ENCODE measurements at regions of chr6 and their contacts with region 1.

Region 1: GRCh38 chr6:139124887-139125672 is 9.8 kb upstream of the HECA start:
- DNase-seq: peak; percentile 91
- ATAC-seq: peak; percentile 96
- H3K4me3 Mint-ChIP-seq: peak overlapping the region; percentile 53
- H3K27ac Mint-ChIP-seq: peak overlapping the region; percentile 96
- H3K4me1 Mint-ChIP-seq: peaks cover 49% of the 10 kb centered on the region
- H3K27me3 Mint-ChIP-seq: no peaks in the 10 kb centered on the region
- CTCF ChIP-seq: peak; percentile 66

Region 2: GRCh38 chr6:139060332-139060731 is 64.7 kb before region 1 on chr6:
- CTCF ChIA-PET with region 1: no interaction called
- POLR2A ChIA-PET with region 1: no interaction called
- intact Hi-C with region 1: no loop called
- DNase-seq: peak; percentile 32
- ATAC-seq: peak; percentile 74
- H3K4me3 Mint-ChIP-seq: no peak overlapping the region
- H3K27ac Mint-ChIP-seq: no peak overlapping the region
- H3K4me1 Mint-ChIP-seq: peaks cover 11% of the 10 kb centered on the region
- H3K27me3 Mint-ChIP-seq: no peaks in the 10 kb centered on the region
- CTCF ChIP-seq: no peak

Region 3: GRCh38 chr6:139112146-139112545 is 12.9 kb before region 1 on chr6:
- CTCF ChIA-PET with region 1: interaction called, 10 read pairs
- POLR2A ChIA-PET with region 1: interaction called, 3 read pairs
- intact Hi-C with region 1: no loop called
- DNase-seq: no peak
- ATAC-seq: no peak
- H3K4me3 Mint-ChIP-seq: no peak overlapping the region
- H3K27ac Mint-ChIP-seq: no peak overlapping the region
- H3K4me1 Mint-ChIP-seq: peaks cover 74% of the 10 kb centered on the region
- H3K27me3 Mint-ChIP-seq: no peaks in the 10 kb centered on the region
- CTCF ChIP-seq: no peak

Region 4: DNA sequence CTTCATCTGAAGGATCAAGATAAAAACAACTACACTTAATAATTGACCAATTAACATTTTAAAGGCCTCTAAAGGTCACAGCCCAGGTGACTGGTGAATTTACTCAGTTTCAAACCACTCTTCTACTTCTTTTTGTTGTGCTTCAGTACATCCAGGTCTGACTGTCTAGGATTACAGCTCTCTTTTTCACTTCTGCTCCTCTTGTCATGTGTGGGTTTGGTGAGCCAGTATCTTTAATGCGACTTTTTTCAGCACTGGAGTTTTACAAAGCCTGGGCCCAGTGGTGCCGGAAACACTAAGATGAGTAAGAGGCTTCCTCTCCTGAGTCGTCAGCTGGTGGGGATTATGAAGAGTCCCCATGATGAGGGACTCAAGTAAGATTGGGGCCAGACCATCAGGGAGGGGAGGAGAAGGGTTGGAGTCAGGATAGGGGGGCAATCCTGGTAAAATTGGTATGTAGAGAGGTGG is 36.8 kb after region 1 on chr6:
- CTCF ChIA-PET with region 1: interaction called, 12 read pairs
- POLR2A ChIA-PET with region 1: interaction called, 4 read pairs
- intact Hi-C with region 1: loop called (anchors 2 kb)
- DNase-seq: peak; percentile 85
- ATAC-seq: peak; percentile 80
- H3K4me3 Mint-ChIP-seq: peak overlapping the region; percentile 47
- H3K27ac Mint-ChIP-seq: peak overlapping the region; percentile 99
- H3K4me1 Mint-ChIP-seq: peaks cover 85% of the 10 kb centered on the region
- H3K27me3 Mint-ChIP-seq: no peaks in the 10 kb centered on the region
- CTCF ChIP-seq: no peak

Region 5: GRCh38 chr6:139173172-139173571 is 48.1 kb after region 1 on chr6:
- CTCF ChIA-PET with region 1: interaction called, 15 read pairs
- POLR2A ChIA-PET with region 1: interaction called, 4 read pairs
- intact Hi-C with region 1: no loop called
- DNase-seq: peak; percentile 47
- ATAC-seq: peak; percentile 92
- H3K4me3 Mint-ChIP-seq: peak overlapping the region; percentile 31
- H3K27ac Mint-ChIP-seq: peak overlapping the region; percentile 89
- H3K4me1 Mint-ChIP-seq: peaks cover 87% of the 10 kb centered on the region
- H3K27me3 Mint-ChIP-seq: no peaks in the 10 kb centered on the region
- CTCF ChIP-seq: peak; percentile 42

Region 6: GRCh38 chr6:139369568-139370282 is 244.6 kb after region 1 on chr6:
- CTCF ChIA-PET with region 1: interaction called, 26 read pairs
- POLR2A ChIA-PET with region 1: interaction called, 4 read pairs
- intact Hi-C with region 1: loop called (anchors 1 kb)
- DNase-seq: peak; percentile 22
- ATAC-seq: no peak
- H3K4me3 Mint-ChIP-seq: peak overlapping the region; percentile 27
- H3K27ac Mint-ChIP-seq: peak overlapping the region; percentile 79
- H3K4me1 Mint-ChIP-seq: peaks cover 38% of the 10 kb centered on the region
- H3K27me3 Mint-ChIP-seq: no peaks in the 10 kb centered on the region
- CTCF ChIP-seq: peak; percentile 76

Measured in activated CD8-positive, alpha-beta T cell treated with anti-CD3 and anti-CD28 coated beads for 36 hours (primary cell).